ENCODE measurements at regions of chr1 and their contacts with region 1.

Region 1: GRCh38 chr1:235843461-235843961 is 23.2 kb downstream of the LYST start:
- DNase-seq: no peak
- ATAC-seq: peak; percentile 82
- H3K4me3 ChIP-seq: no peak overlapping the region
- H3K27ac ChIP-seq: no peak overlapping the region
- H3K4me1 ChIP-seq: peaks cover 7% of the 10 kb centered on the region
- H3K27me3 ChIP-seq: no peaks in the 10 kb centered on the region
- CTCF ChIP-seq: peak; percentile 66 to 75 (median 66)
- EP300 ChIP-seq: no peak
- POLR2A ChIP-seq: no peak
- RAD21 ChIP-seq: peak; percentile 69

Region 2: GRCh38 chr1:234758851-234759250 is 1084.7 kb before region 1 on chr1:
- CTCF ChIA-PET with region 1: no interaction called
- POLR2A ChIA-PET with region 1: no interaction called
- RAD21 ChIA-PET with region 1: no interaction called
- SMC1A ChIA-PET with region 1: no interaction called
- in situ Hi-C with region 1: no loop called
- intact Hi-C with region 1: no loop called
- DNase-seq: no peak
- ATAC-seq: peak; percentile 42; the same call in 2 of the 3 replicates
- H3K4me3 ChIP-seq: no peak overlapping the region
- H3K27ac ChIP-seq: no peak overlapping the region
- H3K4me1 ChIP-seq: peaks cover 6% of the 10 kb centered on the region
- H3K27me3 ChIP-seq: no peaks in the 10 kb centered on the region
- CTCF ChIP-seq: no peak
- EP300 ChIP-seq: 0 out of 4 replicates have a peak, but pooled peaks of 1 of the 2 experiments have one; percentile 13
- POLR2A ChIP-seq: no peak
- RAD21 ChIP-seq: 0 out of 2 replicates have a peak, but pooled peaks have one; percentile 1

Region 3: GRCh38 chr1:235527196-235527814 is 316.2 kb before region 1 on chr1:
- CTCF ChIA-PET with region 1: interaction called, 10 read pairs
- POLR2A ChIA-PET with region 1: no interaction called
- RAD21 ChIA-PET with region 1: interaction called, 3 read pairs
- SMC1A ChIA-PET with region 1: no interaction called
- in situ Hi-C with region 1: no loop called
- intact Hi-C with region 1: no loop called
- DNase-seq: no peak
- ATAC-seq: no peak
- H3K4me3 ChIP-seq: no peak overlapping the region
- H3K27ac ChIP-seq: no peak overlapping the region
- H3K4me1 ChIP-seq: no peaks in the 10 kb centered on the region
- H3K27me3 ChIP-seq: 0 out of 4 replicates have a peak, but pooled peaks cover 0 to 3% of the 10 kb centered on the region in 2 experiments
- CTCF ChIP-seq: no peak
- EP300 ChIP-seq: no peak
- POLR2A ChIP-seq: no peak
- RAD21 ChIP-seq: no peak

Region 4: DNA sequence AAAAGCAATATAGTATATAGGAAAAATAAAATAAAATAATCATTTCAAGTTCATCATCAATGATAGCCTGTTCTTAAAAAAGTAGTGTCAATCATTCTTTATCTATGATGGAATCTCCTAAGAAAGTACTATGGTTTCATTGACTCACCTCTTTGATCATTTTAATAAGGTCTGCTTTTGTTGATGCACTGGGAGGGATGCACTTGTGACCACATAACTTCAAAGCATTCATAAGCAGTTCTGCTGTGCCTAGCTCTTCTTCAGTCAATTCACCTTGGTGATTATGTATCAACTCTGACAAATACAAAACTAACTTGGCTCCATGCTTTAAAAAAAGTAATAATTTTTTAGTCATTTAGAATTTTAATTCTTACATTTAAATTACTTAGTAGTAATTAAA is 109.2 kb before region 1 on chr1:
- CTCF ChIA-PET with region 1: interaction called, 12 read pairs
- POLR2A ChIA-PET with region 1: no interaction called
- RAD21 ChIA-PET with region 1: interaction called, 3 read pairs
- SMC1A ChIA-PET with region 1: interaction called, 5 read pairs
- in situ Hi-C with region 1: no loop called
- intact Hi-C with region 1: no loop called
- DNase-seq: no peak
- ATAC-seq: no peak
- H3K4me3 ChIP-seq: no peak overlapping the region
- H3K27ac ChIP-seq: no peak overlapping the region
- H3K4me1 ChIP-seq: no peaks in the 10 kb centered on the region
- H3K27me3 ChIP-seq: no peaks in the 10 kb centered on the region
- CTCF ChIP-seq: no peak
- EP300 ChIP-seq: no peak
- POLR2A ChIP-seq: no peak
- RAD21 ChIP-seq: no peak

Region 5: DNA sequence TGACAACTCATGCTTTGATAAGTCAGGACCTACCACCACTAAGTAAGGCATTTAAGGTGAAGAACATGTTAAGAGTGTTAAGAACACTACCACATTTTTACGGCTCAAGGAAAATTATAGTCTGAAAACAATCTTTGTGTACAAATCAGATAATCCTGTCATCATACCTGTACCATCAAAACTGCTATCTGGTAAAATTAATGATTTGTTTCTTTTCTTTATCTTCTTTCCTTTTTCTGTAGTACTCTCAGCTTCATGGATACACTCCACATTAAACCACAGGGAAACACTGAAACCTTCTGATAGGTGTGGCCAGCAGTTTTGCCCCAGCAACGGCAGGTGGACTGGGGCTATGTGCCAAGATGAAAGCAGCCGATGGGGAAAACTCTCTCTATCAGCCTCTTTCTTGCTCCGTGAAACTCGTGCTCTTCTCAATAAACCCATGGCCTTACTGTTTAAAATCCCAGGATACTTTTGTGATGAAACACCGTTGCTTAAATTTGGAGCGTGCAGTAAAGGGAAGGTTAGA is 51.9 kb before region 1 on chr1:
- CTCF ChIA-PET with region 1: interaction called, 37 read pairs
- POLR2A ChIA-PET with region 1: no interaction called
- RAD21 ChIA-PET with region 1: interaction called, 14 read pairs
- SMC1A ChIA-PET with region 1: interaction called, 27 read pairs
- in situ Hi-C with region 1: no loop called
- intact Hi-C with region 1: no loop called
- DNase-seq: no peak
- ATAC-seq: no peak
- H3K4me3 ChIP-seq: no peak overlapping the region
- H3K27ac ChIP-seq: no peak overlapping the region
- H3K4me1 ChIP-seq: no peaks in the 10 kb centered on the region
- H3K27me3 ChIP-seq: no peaks in the 10 kb centered on the region
- CTCF ChIP-seq: no peak
- EP300 ChIP-seq: no peak
- POLR2A ChIP-seq: no peak
- RAD21 ChIP-seq: no peak

Region 6: GRCh38 chr1:235855811-235856429 is 12.4 kb after region 1 on chr1:
- CTCF ChIA-PET with region 1: interaction called, 68 read pairs
- POLR2A ChIA-PET with region 1: interaction called, 7 read pairs
- RAD21 ChIA-PET with region 1: interaction called, 38 read pairs
- SMC1A ChIA-PET with region 1: interaction called, 59 read pairs
- in situ Hi-C with region 1: no loop called
- intact Hi-C with region 1: no loop called
- DNase-seq: no peak
- ATAC-seq: peak; percentile 86
- H3K4me3 ChIP-seq: no peak overlapping the region
- H3K27ac ChIP-seq: no peak overlapping the region
- H3K4me1 ChIP-seq: peaks cover 7% of the 10 kb centered on the region; the same call in 1 of the 2 replicates
- H3K27me3 ChIP-seq: no peaks in the 10 kb centered on the region
- CTCF ChIP-seq: no peak
- EP300 ChIP-seq: peak in 1 of 2 experiments; percentile 22; a peak in 2 of 4 replicates
- POLR2A ChIP-seq: no peak
- RAD21 ChIP-seq: no peak

Region 7: DNA sequence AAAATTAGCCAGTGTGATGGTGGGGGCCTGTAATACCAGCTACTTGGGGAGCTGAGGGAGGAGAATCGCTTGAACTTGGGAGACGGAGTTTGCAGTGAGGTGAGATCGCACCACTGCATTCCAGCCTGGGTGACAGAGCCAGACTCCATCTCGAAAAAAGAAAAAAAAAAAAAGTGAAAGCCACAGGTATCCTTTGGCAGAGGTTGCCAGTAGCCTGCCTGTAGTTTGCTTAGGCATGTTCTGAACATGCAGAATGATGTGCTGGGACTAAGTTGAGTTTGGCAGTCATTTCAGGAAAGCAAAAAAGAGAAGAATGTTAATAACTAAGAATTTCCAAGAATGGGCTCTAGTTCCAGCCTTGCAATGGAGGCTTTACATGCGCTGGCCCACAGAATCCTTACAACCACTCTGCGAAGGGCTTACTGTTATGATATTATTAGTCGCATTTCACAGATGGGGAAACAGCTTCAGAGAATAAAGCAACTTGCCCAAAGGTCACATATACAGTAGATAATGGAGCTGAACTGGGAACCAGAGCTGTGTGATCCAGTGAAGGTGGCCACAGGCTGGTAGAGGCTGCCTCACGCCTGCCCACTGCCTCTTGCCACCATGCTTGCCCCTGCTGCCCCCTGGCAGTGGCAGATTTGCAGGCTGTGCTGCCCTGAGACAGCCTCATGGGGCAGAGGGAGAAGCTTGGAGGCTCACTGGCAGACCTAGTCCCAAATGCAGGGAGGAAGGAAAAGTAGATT is 89.7 kb after region 1 on chr1:
- CTCF ChIA-PET with region 1: interaction called, 13 read pairs
- POLR2A ChIA-PET with region 1: no interaction called
- RAD21 ChIA-PET with region 1: interaction called, 5 read pairs
- SMC1A ChIA-PET with region 1: interaction called, 17 read pairs
- in situ Hi-C with region 1: no loop called
- intact Hi-C with region 1: no loop called
- DNase-seq: no peak
- ATAC-seq: peak; percentile 60
- H3K4me3 ChIP-seq: no peak overlapping the region
- H3K27ac ChIP-seq: no peak overlapping the region
- H3K4me1 ChIP-seq: peaks cover 23% of the 10 kb centered on the region
- H3K27me3 ChIP-seq: no peaks in the 10 kb centered on the region
- CTCF ChIP-seq: peak in 2 of 3 experiments; percentile 6; a peak in 1 of 6 replicates
- EP300 ChIP-seq: no peak
- POLR2A ChIP-seq: no peak
- RAD21 ChIP-seq: no peak